Activated naive CD4-positive, alpha-beta T cell treated with anti-CD3 and anti-CD28 coated beads, Interleukin-2, amount 10 ng/mL, durations not matched to agents 7 days and 5 days (primary cell): ENCODE measurements at regions of chr6 and their contacts with region 1.

Region 1: GRCh38 chr6:151014404-151015100 is 149.1 kb downstream of the MTHFD1L start:
- DNase-seq: peak; percentile 73
- H3K4me3 Mint-ChIP-seq: no peak overlapping the region
- H3K27ac Mint-ChIP-seq: no peak overlapping the region
- H3K4me1 Mint-ChIP-seq: peaks cover 12% of the 10 kb centered on the region
- H3K27me3 Mint-ChIP-seq: no peaks in the 10 kb centered on the region

Region 2: DNA sequence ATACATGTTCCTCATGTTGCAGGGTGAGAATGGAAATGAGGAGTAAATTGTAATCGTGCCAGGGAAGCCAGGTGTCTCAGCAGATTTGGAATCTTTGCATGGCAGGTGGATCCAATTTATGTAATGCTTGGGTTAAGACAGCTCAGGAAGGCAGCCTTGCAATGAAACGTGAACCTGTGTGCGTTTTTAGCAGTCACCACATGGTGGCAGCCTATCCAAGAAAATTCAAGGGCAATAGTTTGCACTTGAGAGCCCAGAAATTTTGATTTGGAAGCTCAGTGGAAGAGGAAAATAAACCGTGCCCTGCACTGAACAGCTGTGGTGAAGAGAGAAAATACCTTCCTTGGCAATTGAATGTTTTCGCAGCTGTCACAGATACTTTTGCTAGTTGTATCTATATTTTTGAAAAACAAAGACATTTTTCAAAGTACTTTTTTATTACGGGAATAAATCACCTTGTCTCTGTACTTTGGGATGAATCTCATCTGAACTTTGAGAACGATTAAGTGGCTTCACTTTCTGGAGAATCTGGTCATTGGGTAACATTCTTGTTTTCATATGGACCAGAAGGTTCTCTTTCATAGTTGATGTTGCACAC is 122.6 kb before region 1 on chr6:
- CTCF ChIA-PET with region 1: interaction called, 18 read pairs
- DNase-seq: peak; percentile 76
- H3K4me3 Mint-ChIP-seq: no peak overlapping the region
- H3K27ac Mint-ChIP-seq: no peak overlapping the region
- H3K4me1 Mint-ChIP-seq: peaks cover 31% of the 10 kb centered on the region
- H3K27me3 Mint-ChIP-seq: no peaks in the 10 kb centered on the region

Region 3: DNA sequence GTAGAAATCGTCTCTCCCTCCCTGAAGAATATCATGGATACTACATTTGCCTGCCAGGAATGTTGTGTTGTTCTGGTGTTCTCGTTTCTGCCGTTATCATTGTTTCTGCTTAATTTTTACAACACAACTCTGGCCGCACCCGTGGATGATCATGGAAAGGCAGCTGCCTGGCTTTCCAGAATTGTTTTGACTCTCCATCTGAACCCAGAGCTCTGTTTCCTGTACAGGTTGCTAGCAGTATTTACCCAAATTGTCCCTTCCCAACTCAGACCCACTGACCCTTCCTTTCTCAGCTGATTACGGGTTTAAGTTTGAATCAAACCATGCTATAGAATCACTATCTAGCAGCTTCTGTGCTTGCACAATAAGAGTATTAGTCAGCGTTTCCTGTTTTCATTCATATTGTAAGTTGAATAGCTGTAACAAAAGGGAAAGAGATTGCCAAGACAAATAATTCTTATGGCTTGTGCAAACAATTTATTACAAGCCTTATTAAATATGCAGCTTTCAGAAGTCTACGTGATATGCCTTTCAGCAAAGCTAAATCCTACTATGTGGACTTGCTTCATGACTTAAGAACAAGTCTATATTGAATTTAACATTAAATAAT is 10.0 kb before region 1 on chr6:
- CTCF ChIA-PET with region 1: interaction called, 10 read pairs
- DNase-seq: no peak
- H3K4me3 Mint-ChIP-seq: no peak overlapping the region
- H3K27ac Mint-ChIP-seq: peak overlapping the region; percentile 62
- H3K4me1 Mint-ChIP-seq: peaks cover 12% of the 10 kb centered on the region
- H3K27me3 Mint-ChIP-seq: no peaks in the 10 kb centered on the region

Region 4: DNA sequence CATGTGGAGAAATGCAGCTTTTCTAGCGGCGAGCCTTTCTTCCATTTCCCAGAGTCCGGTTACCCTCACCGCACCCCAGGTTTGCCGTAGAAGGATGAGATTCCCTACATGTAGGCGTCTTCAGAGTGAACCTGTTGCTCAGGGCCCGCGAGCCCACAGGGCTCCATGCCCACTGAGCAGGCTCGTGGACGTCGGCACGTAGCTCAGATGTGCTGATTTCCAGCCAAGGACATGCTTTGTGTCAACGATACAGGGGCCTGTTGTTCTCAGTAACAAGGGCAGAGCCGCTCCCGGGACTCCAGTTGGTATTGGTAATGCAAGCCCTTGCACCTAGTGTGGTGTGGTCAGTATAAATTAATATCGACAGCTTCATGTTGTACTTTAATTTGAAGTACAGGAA is 10.5 kb after region 1 on chr6:
- CTCF ChIA-PET with region 1: interaction called, 11 read pairs
- DNase-seq: no peak
- H3K4me3 Mint-ChIP-seq: no peak overlapping the region
- H3K27ac Mint-ChIP-seq: no peak overlapping the region
- H3K4me1 Mint-ChIP-seq: peaks cover 6% of the 10 kb centered on the region
- H3K27me3 Mint-ChIP-seq: no peaks in the 10 kb centered on the region

Region 5: GRCh38 chr6:151330134-151330696 is 315.7 kb after region 1 on chr6:
- CTCF ChIA-PET with region 1: interaction called, 166 read pairs
- DNase-seq: no peak
- H3K4me3 Mint-ChIP-seq: no peak overlapping the region
- H3K27ac Mint-ChIP-seq: no peak overlapping the region
- H3K4me1 Mint-ChIP-seq: peaks cover 12% of the 10 kb centered on the region
- H3K27me3 Mint-ChIP-seq: peaks cover 50% of the 10 kb centered on the region